Sciatic nerve (tissue), 2 donors: ENCODE measurements at regions of chr9 and their contacts with region 1.

Region 1: DNA sequence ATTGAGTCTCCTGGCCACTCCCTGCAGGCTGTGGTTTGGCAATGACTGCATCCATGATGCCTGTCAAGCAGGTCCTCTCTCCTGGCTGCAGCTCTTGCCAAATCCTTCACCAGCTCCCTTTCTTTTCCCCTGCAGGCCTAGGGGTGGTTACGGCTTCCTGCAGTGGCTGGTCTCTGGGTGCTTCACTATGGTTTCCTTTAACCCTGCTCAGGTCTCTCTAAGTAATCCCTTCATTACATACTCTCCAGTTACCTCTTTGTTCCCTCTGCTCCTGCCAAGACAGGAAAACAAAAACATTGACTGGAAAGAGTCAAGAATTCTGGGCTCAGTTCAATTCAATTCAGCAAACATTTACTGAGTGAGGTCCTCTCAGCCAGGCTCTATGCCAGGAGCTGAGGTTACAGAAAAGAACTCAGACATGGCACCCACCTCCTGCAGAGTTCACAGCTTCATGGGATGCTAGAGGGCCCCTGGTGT is 19.8 kb upstream of the PTPN3 start:
- DNase-seq: no peak
- ATAC-seq: no peak

Region 2: DNA sequence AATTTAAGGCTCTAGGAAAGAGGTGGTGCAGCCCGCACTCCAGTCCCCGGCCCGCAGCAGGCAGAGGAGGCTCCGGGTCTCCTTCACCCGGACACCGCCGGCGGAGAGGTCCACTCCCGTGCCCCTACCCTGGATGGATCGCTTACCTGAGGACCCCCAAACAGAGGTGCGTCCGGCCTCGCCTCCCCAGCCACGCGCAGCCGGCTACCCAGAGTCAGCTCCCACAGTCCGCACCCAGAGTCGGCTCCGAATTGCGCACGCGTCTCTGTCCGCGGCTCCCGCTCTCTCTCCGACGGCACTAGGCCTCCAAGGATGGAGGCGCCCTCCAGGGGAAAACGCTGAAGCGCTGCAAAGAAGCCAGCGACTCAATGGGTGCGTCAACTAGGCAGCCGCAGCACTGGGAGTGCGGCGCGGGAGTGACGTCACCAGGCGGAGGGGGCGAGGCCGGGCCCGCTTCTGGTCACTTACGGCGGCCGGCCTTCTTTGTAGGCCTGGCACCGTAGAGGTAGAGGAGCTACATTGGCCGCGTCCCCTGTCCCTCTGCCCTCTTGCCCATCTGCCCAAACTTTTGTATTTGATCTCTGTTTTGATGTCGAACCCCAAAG is 584.1 kb before region 1 on chr9 and contains the start of gene ELP1:
- intact Hi-C with region 1: no loop called
- DNase-seq: peak; percentile 95
- ATAC-seq: peak; percentile 95
- total RNA-seq, gene ELP1: 21.8 TPM

Region 3: GRCh38 chr9:109440797-109441287 is 77.1 kb before region 1 on chr9:
- intact Hi-C with region 1: loop called (anchors 10 kb)
- DNase-seq: peak; percentile 64
- ATAC-seq: peak; percentile 74